Tibial artery (tissue), 4 donors: ENCODE measurements at regions of chr6 and their contacts with region 1.

Region 1: GRCh38 chr6:33248925-33249731 is 22.5 kb downstream of the VPS52 start:
- DNase-seq: peak; percentile 98 to 99
- H3K4me3 ChIP-seq: peak overlapping the region; percentile 58 to 79
- H3K27ac ChIP-seq: peak overlapping the region; percentile 92 to 97
- H3K4me1 ChIP-seq: peaks cover 0 to 28% (median 20%) of the 10 kb centered on the region in 4 donors
- H3K27me3 ChIP-seq: peaks cover 0 to 17% of the 10 kb centered on the region in 2 donors
- CTCF ChIP-seq: no peak

Region 2: GRCh38 chr6:33014841-33015634 is 234.1 kb before region 1 on chr6:
- intact Hi-C with region 1: loop called (anchors 5 kb)
- DNase-seq: no peak
- H3K4me3 ChIP-seq: no peak overlapping the region
- H3K27ac ChIP-seq: no peak overlapping the region
- H3K4me1 ChIP-seq: peaks cover 0 to 20% (median 5%) of the 10 kb centered on the region in 4 donors
- H3K27me3 ChIP-seq: peaks cover 0 to 29% of the 10 kb centered on the region in 2 donors
- CTCF ChIP-seq: peak; percentile 78 to 81

Region 3: DNA sequence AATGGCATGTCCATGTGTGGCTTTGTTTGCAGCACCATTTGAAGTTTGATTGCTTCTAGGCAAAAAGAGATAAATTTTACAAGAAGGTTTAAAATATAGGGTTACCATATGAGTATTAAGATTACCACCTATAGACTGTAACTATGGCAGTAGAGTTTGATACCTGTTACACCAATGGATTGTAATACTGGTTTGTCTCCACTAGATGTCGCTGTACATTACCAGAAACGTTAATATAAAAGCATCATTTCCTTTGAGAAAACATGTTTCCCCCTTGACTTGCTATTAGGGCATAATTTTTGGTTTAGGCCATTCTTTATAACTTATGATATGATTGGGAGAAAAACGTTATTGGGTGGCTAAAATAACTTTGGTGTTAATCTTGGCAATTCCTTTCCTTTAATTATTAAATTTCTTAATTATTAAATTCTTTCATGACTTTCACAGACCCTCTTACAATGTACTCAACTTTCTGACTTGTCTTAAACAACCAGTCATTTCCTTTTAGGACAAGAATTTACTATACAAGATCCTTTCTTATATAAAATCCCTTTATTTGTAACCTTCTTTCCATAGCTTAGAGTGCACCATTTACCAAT is 130.5 kb before region 1 on chr6:
- intact Hi-C with region 1: loop called (anchors 5 kb)
- DNase-seq: no peak
- H3K4me3 ChIP-seq: no peak overlapping the region
- H3K27ac ChIP-seq: no peak overlapping the region
- H3K4me1 ChIP-seq: peaks cover 0 to 8% (median 3%) of the 10 kb centered on the region in 4 donors
- H3K27me3 ChIP-seq: peaks cover 3 to 53% of the 10 kb centered on the region in 2 donors
- CTCF ChIP-seq: peak; percentile 80 to 87

Region 4: DNA sequence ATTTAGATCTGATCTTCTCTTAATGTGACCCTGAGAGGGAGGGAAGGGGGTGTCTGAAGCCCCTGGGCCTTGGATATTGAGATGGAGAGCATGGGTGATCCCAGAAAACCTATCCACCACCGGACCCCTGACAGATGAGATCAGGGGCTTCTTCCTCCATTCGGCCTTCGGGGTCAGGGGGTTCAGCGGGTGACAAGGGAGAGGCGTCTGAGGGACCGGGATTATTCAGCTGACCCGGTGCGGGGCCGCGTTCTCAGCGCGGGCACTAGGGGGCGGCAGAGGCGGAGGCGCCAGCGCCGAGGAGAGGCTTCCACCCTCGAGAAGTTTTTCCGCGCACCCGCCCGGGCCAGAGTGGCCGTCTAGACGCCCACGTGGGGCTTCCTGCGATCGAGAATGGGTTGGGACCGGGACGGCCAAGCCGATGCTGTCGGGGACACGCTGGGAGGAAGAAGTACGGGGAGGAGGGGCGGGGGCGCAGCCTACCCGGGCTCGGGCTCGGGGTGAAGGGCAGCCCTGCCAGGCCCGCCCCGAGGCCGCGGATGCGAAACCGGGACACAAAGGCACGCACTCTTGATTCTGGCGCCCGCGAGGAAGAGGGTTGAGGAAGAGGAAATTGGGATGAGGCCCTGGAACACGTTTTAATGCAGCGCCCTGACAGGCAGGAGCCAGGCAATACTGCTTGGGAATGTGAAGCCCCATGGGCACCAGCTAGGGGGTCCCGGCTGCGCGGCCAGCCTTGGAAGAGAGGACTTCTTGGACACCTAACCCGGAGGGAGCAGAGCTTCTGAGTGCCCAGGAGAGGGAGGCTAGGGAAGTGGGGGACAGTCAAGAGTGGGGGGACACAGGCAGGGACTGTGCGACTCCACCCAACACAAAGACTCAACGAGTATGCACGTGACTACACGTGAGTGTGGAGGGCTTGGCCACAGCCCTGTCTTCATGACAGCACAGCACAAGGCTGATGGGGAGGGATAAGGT is 87.5 kb before region 1 on chr6:
- intact Hi-C with region 1: loop called (anchors 5 kb)
- DNase-seq: peak; percentile 77 to 89
- H3K4me3 ChIP-seq: peak overlapping the region; percentile 45 to 61
- H3K27ac ChIP-seq: peak overlapping the region; percentile 50 to 52
- H3K4me1 ChIP-seq: peaks cover 0 to 20% (median 14%) of the 10 kb centered on the region in 4 donors
- H3K27me3 ChIP-seq: no peaks in the 10 kb centered on the region
- CTCF ChIP-seq: peak; percentile 89 to 96

Region 5: GRCh38 chr6:33213166-33213988 is 35.8 kb before region 1 on chr6:
- intact Hi-C with region 1: loop called (anchors 5 kb)
- DNase-seq: peak in 1 of 2 donors; percentile 68
- H3K4me3 ChIP-seq: peak overlapping the region; percentile 52 to 54
- H3K27ac ChIP-seq: peak overlapping the region in 1 of 2 donors; percentile 56
- H3K4me1 ChIP-seq: peaks cover 0 to 26% (median 19%) of the 10 kb centered on the region in 4 donors
- H3K27me3 ChIP-seq: no peaks in the 10 kb centered on the region
- CTCF ChIP-seq: no peak